A673 (cell line): ENCODE measurements at regions of chr1 and their contacts with region 1.

Region 1: GRCh38 chr1:162612606-162613400 is 19.5 kb upstream of the DDR2 start:
- DNase-seq: no peak
- H3K4me3 ChIP-seq: no peak overlapping the region
- H3K27ac ChIP-seq: peak overlapping the region; percentile 11
- H3K4me1 ChIP-seq: peaks cover 15% of the 10 kb centered on the region
- H3K27me3 ChIP-seq: no peaks in the 10 kb centered on the region
- CTCF ChIP-seq: no peak

Region 2: DNA sequence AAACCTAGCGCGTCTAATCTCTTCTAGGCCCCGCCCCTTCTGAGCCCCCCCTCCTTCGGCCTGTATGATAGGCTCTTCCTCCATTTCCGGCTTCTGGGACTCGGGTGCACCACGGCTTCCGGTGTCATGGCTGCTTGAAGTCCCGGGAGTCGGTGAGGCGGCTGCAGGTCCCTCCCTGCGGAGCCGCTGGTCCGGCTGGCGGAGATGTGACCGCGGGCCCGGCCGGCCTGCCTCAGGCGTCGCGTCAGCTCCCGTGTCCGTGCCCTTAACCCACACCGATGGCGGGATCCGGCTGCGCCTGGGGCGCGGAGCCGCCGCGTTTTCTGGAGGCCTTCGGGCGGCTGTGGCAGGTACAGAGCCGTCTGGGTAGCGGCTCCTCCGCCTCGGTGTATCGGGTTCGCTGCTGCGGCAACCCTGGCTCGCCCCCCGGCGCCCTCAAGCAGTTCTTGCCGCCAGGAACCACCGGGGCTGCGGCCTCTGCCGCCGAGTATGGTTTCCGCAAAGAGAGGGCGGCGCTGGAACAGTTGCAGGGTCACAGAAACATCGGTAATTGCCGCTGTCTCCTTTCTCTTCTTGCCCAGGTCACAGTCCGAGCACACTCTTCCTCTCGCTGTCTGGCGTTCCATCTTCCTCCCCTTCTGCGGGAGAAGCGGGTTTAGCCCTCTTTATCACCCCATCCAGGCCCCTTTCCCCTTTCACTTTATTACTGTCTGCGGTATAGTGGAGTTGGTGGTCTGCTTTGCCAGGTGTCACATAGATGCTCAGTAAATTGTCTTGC is 114.9 kb before region 1 on chr1 and contains the start of gene UHMK1:
- CTCF ChIA-PET with region 1: no interaction called
- POLR2A ChIA-PET with region 1: no interaction called
- intact Hi-C with region 1: no loop called
- DNase-seq: peak; percentile 98
- H3K4me3 ChIP-seq: peak within 1 kb of the TSS; percentile 91
- H3K27ac ChIP-seq: peak within 1 kb of the TSS; percentile 95
- H3K4me1 ChIP-seq: peaks cover 22% of the 10 kb centered on the region
- H3K27me3 ChIP-seq: no peaks in the 10 kb centered on the region
- CTCF ChIP-seq: no peak
- total RNA-seq, gene UHMK1: 50.3 and 62.2 TPM in 2 replicates

Region 3: GRCh38 chr1:162822391-162823200 is 209.8 kb after region 1 on chr1:
- CTCF ChIA-PET with region 1: interaction called, 4 read pairs
- POLR2A ChIA-PET with region 1: interaction called, 3 read pairs
- intact Hi-C with region 1: loop called (anchors 10 kb)
- DNase-seq: peak; percentile 65
- H3K4me3 ChIP-seq: peak overlapping the region; percentile 53
- H3K27ac ChIP-seq: peak overlapping the region; percentile 70
- H3K4me1 ChIP-seq: peaks cover 26% of the 10 kb centered on the region
- H3K27me3 ChIP-seq: no peaks in the 10 kb centered on the region
- CTCF ChIP-seq: 0 out of 2 replicates have a peak, but pooled peaks have one; percentile 8